Heart right ventricle (tissue), 16 donors: ENCODE measurements at regions of chr6 and their contacts with region 1.

Region 1: DNA sequence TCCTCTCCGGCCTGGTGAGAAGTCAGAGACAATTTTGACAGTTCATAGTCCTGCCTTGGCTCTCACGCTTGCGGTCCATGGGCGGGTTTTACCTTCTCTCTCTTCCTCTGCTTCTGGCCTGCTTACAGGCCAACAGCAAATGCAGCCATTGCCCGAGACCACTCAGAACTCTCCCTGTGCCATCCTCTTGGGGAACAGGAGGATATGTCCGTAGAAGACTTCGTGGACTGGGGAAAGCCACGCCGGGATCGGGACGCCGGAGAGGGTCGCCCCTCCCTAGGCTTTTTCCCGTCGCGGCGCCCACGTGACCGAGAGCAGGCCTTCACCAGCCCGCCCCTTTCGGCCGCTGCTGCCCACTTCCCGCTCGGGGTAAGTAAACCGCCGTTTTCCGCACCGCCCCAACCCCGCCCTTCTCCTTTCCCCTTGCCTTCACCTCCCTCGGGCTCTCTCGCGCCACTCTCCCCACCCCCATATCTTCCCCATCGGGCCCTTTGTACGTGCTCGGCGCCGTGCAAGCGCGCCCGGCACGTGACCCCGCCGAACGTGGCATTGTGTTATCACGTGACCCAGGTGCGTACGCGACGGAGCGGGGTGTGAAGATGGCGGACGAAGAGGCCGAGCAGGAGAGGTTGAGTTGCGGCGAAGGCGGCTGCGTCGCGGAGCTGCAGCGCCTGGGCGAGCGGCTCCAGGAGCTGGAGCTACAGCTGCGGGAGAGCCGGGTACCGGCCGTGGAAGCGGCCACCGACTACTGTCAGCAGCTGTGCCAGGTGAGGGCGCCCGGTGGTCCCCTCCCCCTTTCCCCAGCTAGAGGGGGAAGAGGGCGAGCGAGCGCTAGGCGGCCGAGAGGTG is at the start of gene ZNF292:
- DNase-seq: peak; percentile 94 to 95
- ATAC-seq: peak; percentile 89 to 96 (median 93)
- H3K4me3 ChIP-seq: peak within 1 kb of the TSS; percentile 86 to 98 (median 93)
- H3K27ac ChIP-seq: peak within 1 kb of the TSS; percentile 87 to 99 (median 93)
- H3K4me1 ChIP-seq: peaks cover 0 to 71% (median 55%) of the 10 kb centered on the region in 9 donors
- H3K27me3 ChIP-seq: no peaks in the 10 kb centered on the region
- CTCF ChIP-seq: peak in 1 of 9 donors; percentile 30
- total RNA-seq, gene ZNF292: 28.0 to 38.2 (median 31.7) TPM

Region 2: DNA sequence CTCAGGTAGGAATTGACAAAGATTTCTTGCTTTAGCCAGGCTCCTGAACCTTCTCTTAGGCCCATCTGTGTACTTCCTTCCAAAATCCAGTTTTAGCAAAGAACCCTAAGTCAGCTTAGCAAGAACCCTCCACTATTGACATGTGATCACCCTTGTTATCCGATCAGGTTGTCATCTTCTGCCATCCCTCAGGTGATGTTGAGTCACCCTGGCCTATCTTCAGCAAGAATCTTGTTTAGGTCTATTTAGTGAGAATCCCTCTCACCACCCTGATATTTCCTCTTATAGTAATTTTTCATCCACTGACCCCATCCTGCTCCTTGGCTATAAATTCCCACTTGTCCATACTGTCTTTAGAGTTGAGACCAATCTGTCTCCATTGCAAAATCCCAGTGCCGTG is 22.0 kb before region 1 on chr6:
- intact Hi-C with region 1: no loop called
- DNase-seq: no peak
- ATAC-seq: no peak
- H3K4me3 ChIP-seq: no peak overlapping the region
- H3K27ac ChIP-seq: no peak overlapping the region
- H3K4me1 ChIP-seq: no peaks in the 10 kb centered on the region
- H3K27me3 ChIP-seq: no peaks in the 10 kb centered on the region
- CTCF ChIP-seq: no peak

Region 3: GRCh38 chr6:87210979-87211378 is 55.8 kb after region 1 on chr6:
- intact Hi-C with region 1: loop called in 3 of 10 experiments (anchors 10 kb)
- DNase-seq: no peak
- ATAC-seq: no peak
- H3K4me3 ChIP-seq: no peak overlapping the region
- H3K27ac ChIP-seq: no peak overlapping the region
- H3K4me1 ChIP-seq: peaks cover 0 to 44% (median 21%) of the 10 kb centered on the region in 9 donors
- H3K27me3 ChIP-seq: no peaks in the 10 kb centered on the region
- CTCF ChIP-seq: no peak

Region 4: DNA sequence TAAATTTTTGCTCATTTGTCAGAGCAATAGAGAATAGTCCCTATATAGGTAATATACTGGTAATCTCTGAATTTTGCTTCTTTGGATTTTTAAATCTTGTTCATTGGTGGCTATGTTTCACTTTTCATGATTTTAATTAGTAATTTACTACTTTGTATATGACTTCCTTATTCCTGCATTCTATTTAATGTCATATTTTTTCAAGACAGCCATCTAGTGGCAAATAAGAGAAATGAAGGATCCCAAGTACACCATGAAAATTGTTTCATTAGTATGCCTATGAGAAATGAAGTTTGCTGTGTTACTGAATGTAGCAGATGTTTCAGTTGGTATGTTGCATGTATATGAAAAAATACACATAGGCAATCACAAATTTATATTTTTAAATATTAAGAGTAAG is 82.6 kb after region 1 on chr6:
- intact Hi-C with region 1: loop called in 3 of 10 experiments (anchors 5 kb)
- DNase-seq: no peak
- ATAC-seq: no peak
- H3K4me3 ChIP-seq: no peak overlapping the region
- H3K27ac ChIP-seq: no peak overlapping the region
- H3K4me1 ChIP-seq: no peaks in the 10 kb centered on the region
- H3K27me3 ChIP-seq: no peaks in the 10 kb centered on the region
- CTCF ChIP-seq: peak; percentile 36 to 75 (median 61)

Region 5: GRCh38 chr6:87281426-87281825 is 126.2 kb after region 1 on chr6:
- intact Hi-C with region 1: no loop called
- DNase-seq: no peak
- ATAC-seq: peak in 1 of 8 donors; percentile 56
- H3K4me3 ChIP-seq: no peak overlapping the region
- H3K27ac ChIP-seq: no peak overlapping the region
- H3K4me1 ChIP-seq: no peaks in the 10 kb centered on the region
- H3K27me3 ChIP-seq: no peaks in the 10 kb centered on the region
- CTCF ChIP-seq: no peak

Region 6: GRCh38 chr6:87407901-87408720 is 252.9 kb after region 1 on chr6 and contains the start of gene CFAP206:
- intact Hi-C with region 1: loop called in 2 of 10 experiments (anchors 10 kb)
- DNase-seq: peak; percentile 79 to 82
- ATAC-seq: peak; percentile 93 to 99 (median 96)
- H3K4me3 ChIP-seq: peak within 1 kb of the TSS; percentile 78 to 99 (median 90)
- H3K27ac ChIP-seq: peak within 1 kb of the TSS in 9 of 10 donors; percentile 71 to 88 (median 83)
- H3K4me1 ChIP-seq: peaks cover 0 to 15% (median 0%) of the 10 kb centered on the region in 9 donors
- H3K27me3 ChIP-seq: no peaks in the 10 kb centered on the region
- CTCF ChIP-seq: peak in 3 of 9 donors; percentile 14 to 33 (median 30)
- total RNA-seq, gene CFAP206: 0.18 to 0.54 (median 0.28) TPM in 5 of 10 donors, not detected in the others

Region 7: DNA sequence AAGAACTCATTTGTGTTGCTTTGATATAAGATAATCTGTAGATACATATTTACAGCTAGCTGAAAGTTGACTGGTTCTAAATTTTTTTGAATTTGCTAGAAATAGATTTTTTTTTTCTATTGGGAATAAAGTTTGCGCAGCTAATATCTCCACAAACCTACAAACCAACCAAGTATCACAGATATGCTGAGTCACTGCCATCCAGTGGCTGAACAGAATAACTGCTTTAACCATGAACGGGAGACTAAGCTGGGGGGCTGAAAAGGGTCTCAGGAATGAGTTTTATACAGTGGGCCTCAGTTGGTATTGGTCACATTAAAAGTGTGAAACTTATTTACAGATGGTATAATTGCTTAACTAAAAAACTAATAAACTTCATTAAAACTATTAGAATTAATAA is 1337.6 kb after region 1 on chr6:
- intact Hi-C with region 1: no loop called
- DNase-seq: no peak
- ATAC-seq: no peak
- H3K4me3 ChIP-seq: no peak overlapping the region
- H3K27ac ChIP-seq: no peak overlapping the region
- H3K4me1 ChIP-seq: no peaks in the 10 kb centered on the region
- H3K27me3 ChIP-seq: no peaks in the 10 kb centered on the region
- CTCF ChIP-seq: peak in 7 of 9 donors; percentile 38 to 61 (median 48)